ENCODE measurements at regions of chr11 and their contacts with region 1.

Region 1: GRCh38 chr11:74321487-74322188 is 10.2 kb upstream of the P4HA3 start:
- DNase-seq: peak; percentile 12
- ATAC-seq: peak; percentile 47
- H3K4me3 ChIP-seq: no peak overlapping the region
- H3K27ac ChIP-seq: no peak overlapping the region
- H3K4me1 ChIP-seq: no peaks in the 10 kb centered on the region
- H3K27me3 ChIP-seq: peaks cover 0 to 9% of the 10 kb centered on the region in 2 experiments; a peak in 3 of 5 replicates
- CTCF ChIP-seq: peak; percentile 64
- EP300 ChIP-seq: no peak
- POLR2A ChIP-seq: no peak
- RAD21 ChIP-seq: no peak

Region 2: DNA sequence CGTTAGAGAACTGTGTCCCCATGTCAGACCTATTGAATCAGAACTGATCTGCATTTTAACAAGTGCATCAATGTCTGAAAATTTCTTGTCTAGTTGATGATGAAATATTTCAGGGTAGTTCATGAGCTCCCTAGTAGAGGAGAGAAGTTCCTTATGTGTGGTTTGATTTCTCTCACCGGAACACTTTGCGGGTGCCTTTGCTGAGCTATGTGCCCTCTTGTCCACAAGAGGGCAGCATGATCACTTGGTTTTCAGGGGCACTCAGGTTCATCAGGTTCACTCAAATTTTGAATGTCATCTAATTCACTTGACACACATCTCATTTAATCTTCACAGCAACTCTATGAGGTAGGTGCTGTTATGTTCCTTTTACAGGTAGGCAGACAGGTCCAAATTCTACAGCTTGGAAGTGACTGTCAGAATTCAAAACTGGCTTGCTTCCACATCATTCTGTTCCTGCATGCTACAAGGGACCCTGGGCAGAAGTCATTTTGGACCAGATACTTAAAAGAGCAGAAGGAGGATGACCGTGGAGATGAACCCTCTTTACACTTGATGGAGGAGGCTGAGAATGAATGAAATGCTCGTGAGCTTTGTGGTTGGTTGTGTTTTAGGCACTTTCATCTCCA is 65.8 kb before region 1 on chr11:
- CTCF ChIA-PET with region 1: interaction called, 7 read pairs
- POLR2A ChIA-PET with region 1: no interaction called
- in situ Hi-C with region 1: loop called (anchors 10 kb)
- intact Hi-C with region 1: loop called (anchors 5 kb)
- DNase-seq: peak; percentile 42
- ATAC-seq: peak; percentile 61
- H3K4me3 ChIP-seq: no peak overlapping the region
- H3K27ac ChIP-seq: no peak overlapping the region
- H3K4me1 ChIP-seq: peaks cover 8% of the 10 kb centered on the region; the same call in 1 of the 2 replicates
- H3K27me3 ChIP-seq: no peaks in the 10 kb centered on the region
- CTCF ChIP-seq: peak; percentile 87
- EP300 ChIP-seq: no peak
- POLR2A ChIP-seq: no peak
- RAD21 ChIP-seq: 0 out of 2 replicates have a peak, but pooled peaks have one; percentile 21

Region 3: DNA sequence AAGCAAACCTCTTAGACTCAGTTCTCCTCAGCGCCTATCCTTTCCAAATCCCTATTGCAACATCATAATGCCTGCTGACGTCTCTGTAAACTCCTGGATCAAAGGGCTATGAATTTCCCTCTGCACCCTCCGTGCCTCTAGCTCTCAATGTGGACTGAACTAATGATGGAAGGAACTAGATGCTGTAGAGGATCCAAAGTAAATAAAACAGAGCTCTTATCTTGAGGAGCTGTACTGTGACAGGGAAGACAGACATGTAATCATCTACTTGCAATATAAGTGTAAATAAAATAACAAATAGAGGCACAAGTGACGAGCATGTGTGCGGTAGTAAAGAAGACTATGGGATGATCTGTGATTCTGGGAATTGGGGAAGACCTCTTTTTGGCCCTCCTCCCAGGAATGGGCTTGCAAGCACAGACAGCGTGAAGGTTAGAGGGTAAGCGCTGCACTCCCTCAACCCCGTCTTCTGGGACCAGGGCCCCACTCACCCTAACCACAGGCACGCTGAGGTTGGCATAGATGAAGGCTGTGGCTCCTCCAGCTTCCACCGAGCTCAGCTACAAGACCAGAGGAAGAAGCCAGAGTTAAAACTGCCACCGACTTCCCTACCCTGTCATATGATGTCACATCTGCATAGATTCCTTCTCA is 52.4 kb before region 1 on chr11:
- CTCF ChIA-PET with region 1: no interaction called
- POLR2A ChIA-PET with region 1: no interaction called
- in situ Hi-C with region 1: loop called (anchors 10 kb)
- intact Hi-C with region 1: no loop called
- DNase-seq: no peak
- ATAC-seq: no peak; the same call in 2 of the 3 replicates
- H3K4me3 ChIP-seq: no peak overlapping the region
- H3K27ac ChIP-seq: no peak overlapping the region
- H3K4me1 ChIP-seq: peaks cover 11% of the 10 kb centered on the region; the same call in 1 of the 2 replicates
- H3K27me3 ChIP-seq: peaks cover 0 to 18% of the 10 kb centered on the region in 2 experiments; a peak in 2 of 5 replicates
- CTCF ChIP-seq: no peak
- EP300 ChIP-seq: no peak
- POLR2A ChIP-seq: no peak
- RAD21 ChIP-seq: no peak

Measured in HepG2 (cell line).